ENCODE measurements at regions of chr4 and their contacts with region 1.

Region 1: DNA sequence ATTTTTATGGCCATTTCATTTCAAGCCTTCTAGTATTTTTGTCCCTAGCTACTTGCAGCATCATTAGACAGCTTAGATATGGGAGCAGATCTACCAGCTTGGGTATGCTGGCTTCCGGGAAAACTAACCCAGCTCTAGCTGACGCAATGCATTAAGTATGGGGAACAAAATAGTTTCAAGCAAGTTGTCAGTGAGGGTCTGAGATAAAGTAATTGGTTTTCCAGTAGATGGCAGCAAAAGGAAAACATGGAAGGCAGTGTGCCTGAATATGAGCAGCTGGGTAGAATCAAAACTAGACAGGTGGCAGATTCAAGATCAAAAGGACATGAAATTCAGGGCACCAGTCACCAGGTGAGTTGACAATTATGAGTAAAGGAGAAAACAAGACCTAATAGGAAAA is 340.9 kb upstream of the CTSO start:
- DNase-seq: no peak
- H3K4me3 ChIP-seq: no peak overlapping the region
- H3K27ac ChIP-seq: no peak overlapping the region
- H3K4me1 ChIP-seq: no peaks in the 10 kb centered on the region
- H3K27me3 ChIP-seq: no peaks in the 10 kb centered on the region
- CTCF ChIP-seq: peak in 1 of 4 experiments; percentile 5
- POLR2A ChIP-seq: no peak

Region 2: GRCh38 chr4:155881555-155881954 is 413.0 kb before region 1 on chr4:
- intact Hi-C with region 1: no loop called
- DNase-seq: no peak
- H3K4me3 ChIP-seq: no peak overlapping the region
- H3K27ac ChIP-seq: no peak overlapping the region
- H3K4me1 ChIP-seq: no peaks in the 10 kb centered on the region
- H3K27me3 ChIP-seq: no peaks in the 10 kb centered on the region
- CTCF ChIP-seq: no peak
- POLR2A ChIP-seq: no peak

Region 3: GRCh38 chr4:156128616-156129015 is 166.0 kb before region 1 on chr4:
- intact Hi-C with region 1: no loop called
- DNase-seq: no peak
- H3K4me3 ChIP-seq: no peak overlapping the region
- H3K27ac ChIP-seq: no peak overlapping the region
- H3K4me1 ChIP-seq: no peaks in the 10 kb centered on the region
- H3K27me3 ChIP-seq: no peaks in the 10 kb centered on the region
- CTCF ChIP-seq: no peak
- POLR2A ChIP-seq: no peak

Region 4: DNA sequence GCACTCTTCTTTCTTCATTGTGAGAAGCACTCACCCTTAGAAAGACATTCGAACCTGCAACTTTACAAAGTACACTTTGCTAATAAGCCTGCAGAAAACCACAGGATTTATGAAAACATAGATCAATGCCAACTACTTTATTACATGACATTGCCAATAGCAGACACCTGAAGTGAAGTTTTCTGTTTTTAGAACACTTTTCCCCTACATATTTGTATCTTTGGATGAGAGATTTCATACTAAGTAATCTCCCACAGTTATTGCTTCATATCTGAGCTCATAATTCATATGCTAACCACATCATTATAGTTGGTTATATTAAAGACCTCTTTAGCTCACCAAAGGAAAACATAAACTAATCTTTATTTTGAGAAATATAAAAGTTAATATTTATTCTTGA is 64.4 kb before region 1 on chr4:
- intact Hi-C with region 1: no loop called
- DNase-seq: no peak
- H3K4me3 ChIP-seq: no peak overlapping the region
- H3K27ac ChIP-seq: no peak overlapping the region
- H3K4me1 ChIP-seq: no peaks in the 10 kb centered on the region
- H3K27me3 ChIP-seq: no peaks in the 10 kb centered on the region
- CTCF ChIP-seq: no peak
- POLR2A ChIP-seq: no peak

Region 5: DNA sequence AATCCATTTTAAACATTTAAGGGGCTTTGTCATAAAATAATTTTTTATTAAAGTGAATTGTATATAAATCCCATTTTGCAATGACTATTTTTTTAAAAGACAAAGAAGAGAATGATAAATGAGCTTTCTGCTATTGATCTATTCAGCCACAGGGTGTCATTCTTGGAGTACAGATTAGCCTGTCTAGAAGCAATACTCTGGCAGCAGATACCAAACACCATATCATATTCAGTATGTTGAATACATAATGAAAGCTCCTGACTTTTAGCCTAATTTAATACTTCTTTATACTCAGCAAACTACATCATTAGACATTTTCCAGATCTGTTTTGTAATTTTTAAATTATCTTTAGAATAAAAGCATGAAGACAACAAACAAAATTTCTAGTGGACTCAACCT is 180.7 kb after region 1 on chr4:
- intact Hi-C with region 1: loop called (anchors 10 kb)
- DNase-seq: peak; percentile 8
- H3K4me3 ChIP-seq: no peak overlapping the region
- H3K27ac ChIP-seq: no peak overlapping the region
- H3K4me1 ChIP-seq: no peaks in the 10 kb centered on the region
- H3K27me3 ChIP-seq: no peaks in the 10 kb centered on the region
- CTCF ChIP-seq: peak in 3 of 4 experiments; percentile 40 to 74 (median 73)
- POLR2A ChIP-seq: no peak

Region 6: GRCh38 chr4:157739237-157739636 is 1444.7 kb after region 1 on chr4:
- intact Hi-C with region 1: no loop called
- DNase-seq: no peak
- H3K4me3 ChIP-seq: no peak overlapping the region
- H3K27ac ChIP-seq: no peak overlapping the region
- H3K4me1 ChIP-seq: no peaks in the 10 kb centered on the region
- H3K27me3 ChIP-seq: no peaks in the 10 kb centered on the region
- CTCF ChIP-seq: no peak
- POLR2A ChIP-seq: no peak